Endothelial cell of umbilical vein (primary cell): ENCODE measurements at regions of chr18 and their contacts with region 1.

Region 1: DNA sequence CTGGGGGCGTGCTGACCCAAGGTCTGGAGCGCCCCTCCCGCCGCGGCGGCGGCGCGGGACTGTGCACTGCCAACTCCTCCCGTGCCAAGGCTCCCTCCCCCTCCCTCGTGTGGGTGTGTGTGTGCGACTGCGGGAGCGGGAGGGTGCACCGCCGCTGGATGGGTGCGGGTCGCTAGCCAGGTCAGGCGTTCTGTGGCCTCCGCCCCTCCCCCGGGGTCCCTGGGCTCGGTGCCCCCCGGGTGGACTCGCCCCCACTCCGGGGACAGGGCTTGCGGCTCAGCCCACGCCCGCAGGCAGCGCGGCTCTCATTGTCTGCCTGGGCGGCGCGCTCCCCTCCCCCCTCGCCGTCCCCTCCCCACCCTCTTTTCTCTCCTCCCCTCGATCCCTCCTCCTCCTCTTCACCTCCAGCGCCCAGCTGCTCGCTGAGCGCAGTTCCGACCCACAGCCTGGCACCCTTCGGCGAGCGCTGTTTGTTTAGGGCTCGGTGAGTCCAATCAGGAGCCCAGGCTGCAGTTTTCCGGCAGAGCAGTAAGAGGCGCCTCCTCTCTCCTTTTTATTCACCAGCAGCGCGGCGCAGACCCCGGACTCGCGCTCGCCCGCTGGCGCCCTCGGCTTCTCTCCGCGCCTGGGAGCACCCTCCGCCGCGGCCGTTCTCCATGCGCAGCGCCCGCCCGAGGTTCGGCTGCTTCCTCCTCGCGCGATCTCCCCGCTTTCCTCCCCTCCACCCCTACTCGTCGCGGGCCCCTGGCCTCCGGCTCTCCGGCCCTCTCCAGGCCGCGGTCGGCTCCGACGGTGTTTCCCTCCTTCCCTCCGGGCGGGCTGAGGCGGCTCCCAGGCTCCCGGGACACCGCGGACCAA is at the start of gene GATA6:
- DNase-seq: peak; percentile 95
- H3K4me3 ChIP-seq: peak within 1 kb of the TSS; percentile 83 to 86 (median 83)
- H3K27ac ChIP-seq: peak within 1 kb of the TSS; percentile 87
- H3K4me1 ChIP-seq: peaks cover 33% of the 10 kb centered on the region
- H3K27me3 ChIP-seq: peaks cover 28 to 42% of the 10 kb centered on the region in 2 experiments
- CTCF ChIP-seq: peak; percentile 14 to 63
- POLR2A ChIP-seq: peak; percentile 91
- total RNA-seq, gene GATA6: 14.6 and 14.9 TPM in 2 replicates

Region 2: GRCh38 chr18:21897811-21898210 is 271.4 kb before region 1 on chr18:
- CTCF ChIA-PET with region 1: no interaction called
- POLR2A ChIA-PET with region 1: no interaction called
- dilution Hi-C with region 1: no loop called
- intact Hi-C with region 1: loop called (anchors 2 kb)
- DNase-seq: peak; percentile 57
- H3K4me3 ChIP-seq: no peak overlapping the region
- H3K27ac ChIP-seq: no peak overlapping the region
- H3K4me1 ChIP-seq: peaks cover 9% of the 10 kb centered on the region
- H3K27me3 ChIP-seq: no peaks in the 10 kb centered on the region
- CTCF ChIP-seq: peak; percentile 71 to 74
- POLR2A ChIP-seq: no peak

Region 3: GRCh38 chr18:21997207-21998143 is 171.8 kb before region 1 on chr18:
- CTCF ChIA-PET with region 1: interaction called, 4 read pairs
- POLR2A ChIA-PET with region 1: no interaction called
- dilution Hi-C with region 1: no loop called
- intact Hi-C with region 1: loop called (anchors 2 kb)
- DNase-seq: peak; percentile 68
- H3K4me3 ChIP-seq: no peak overlapping the region
- H3K27ac ChIP-seq: no peak overlapping the region
- H3K4me1 ChIP-seq: no peaks in the 10 kb centered on the region
- H3K27me3 ChIP-seq: peaks cover 0 to 2% of the 10 kb centered on the region in 2 experiments
- CTCF ChIP-seq: peak; percentile 70 to 74
- POLR2A ChIP-seq: no peak

Region 4: GRCh38 chr18:22185273-22185672 is 16.0 kb after region 1 on chr18:
- CTCF ChIA-PET with region 1: interaction called, 8 read pairs
- POLR2A ChIA-PET with region 1: interaction called, 4 read pairs
- dilution Hi-C with region 1: no loop called
- intact Hi-C with region 1: loop called (anchors 1 kb)
- DNase-seq: peak; percentile 21
- H3K4me3 ChIP-seq: no peak overlapping the region
- H3K27ac ChIP-seq: no peak overlapping the region
- H3K4me1 ChIP-seq: peaks cover 62% of the 10 kb centered on the region
- H3K27me3 ChIP-seq: no peaks in the 10 kb centered on the region
- CTCF ChIP-seq: peak in 1 of 2 donors; percentile 26
- POLR2A ChIP-seq: no peak

Region 5: DNA sequence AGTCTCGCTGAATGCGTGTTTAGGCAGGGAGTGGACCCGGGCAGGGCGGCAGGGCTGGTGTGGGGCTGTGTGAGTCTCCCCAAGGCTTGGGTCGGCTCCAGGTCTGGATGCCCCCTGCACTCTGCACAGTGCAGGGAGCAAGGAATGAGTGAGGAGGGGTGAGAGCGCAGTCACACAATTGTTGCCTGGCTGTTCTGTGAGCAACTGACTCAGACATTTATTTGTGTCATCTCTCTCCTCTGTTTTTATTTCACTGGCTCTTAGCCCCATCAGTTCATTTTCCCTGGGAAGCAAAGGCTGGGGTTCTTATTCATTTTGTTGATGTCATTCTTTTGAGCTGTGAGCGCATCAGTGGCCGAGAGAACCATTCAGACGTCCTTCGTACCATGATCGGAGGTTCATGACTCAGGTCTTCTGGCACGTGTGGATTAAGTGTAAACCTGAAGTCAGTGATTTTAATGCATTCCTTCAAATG is 61.3 kb after region 1 on chr18:
- CTCF ChIA-PET with region 1: no interaction called
- POLR2A ChIA-PET with region 1: no interaction called
- dilution Hi-C with region 1: no loop called
- intact Hi-C with region 1: no loop called
- DNase-seq: no peak
- H3K4me3 ChIP-seq: no peak overlapping the region
- H3K27ac ChIP-seq: no peak overlapping the region
- H3K4me1 ChIP-seq: peaks cover 5% of the 10 kb centered on the region
- H3K27me3 ChIP-seq: peaks cover 0 to 10% of the 10 kb centered on the region in 2 experiments
- CTCF ChIP-seq: no peak
- POLR2A ChIP-seq: no peak

Region 6: DNA sequence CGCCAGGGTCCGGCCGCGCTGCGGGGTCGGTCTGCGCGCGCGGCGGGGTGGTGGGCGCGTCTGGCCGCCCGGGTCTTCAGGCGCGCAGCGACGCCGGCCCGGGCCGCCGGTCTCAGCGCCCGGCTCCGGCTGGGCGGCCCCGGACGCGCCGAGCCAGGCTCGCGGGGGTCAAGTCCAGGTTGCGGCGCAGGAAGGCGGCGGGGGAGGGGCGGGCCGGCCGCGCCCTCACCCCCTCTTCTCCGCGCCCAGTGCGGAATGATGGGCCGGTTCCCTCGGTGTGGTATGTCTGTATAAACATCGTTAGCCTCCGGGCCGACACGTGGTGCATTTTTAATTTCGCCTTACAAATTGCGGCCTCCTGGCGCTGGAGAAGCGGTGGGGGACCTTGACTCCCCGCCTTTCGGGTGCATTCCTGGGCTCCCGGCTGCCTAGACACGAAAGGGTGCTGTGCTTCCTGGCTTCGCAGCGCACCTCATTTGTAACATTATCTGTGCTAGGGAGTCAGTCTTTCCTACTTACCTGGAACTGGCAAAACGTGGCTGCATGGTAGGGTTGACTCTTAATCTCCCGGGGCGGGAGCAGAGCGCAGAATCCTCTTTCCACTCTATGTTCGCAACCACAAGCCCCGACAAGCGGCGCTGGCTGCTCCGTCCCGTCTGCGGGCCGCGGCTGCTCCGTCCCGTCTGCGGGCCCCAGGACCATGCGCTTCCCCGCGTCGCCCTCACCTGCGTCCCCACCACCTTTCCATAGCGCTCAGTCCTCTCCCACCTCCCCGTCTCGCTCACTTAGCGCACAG is 179.5 kb after region 1 on chr18:
- CTCF ChIA-PET with region 1: interaction called, 8 read pairs
- POLR2A ChIA-PET with region 1: no interaction called
- dilution Hi-C with region 1: no loop called
- intact Hi-C with region 1: loop called (anchors 1 kb)
- DNase-seq: peak; percentile 56
- H3K4me3 ChIP-seq: peak overlapping the region in 2 of 3 experiments; percentile 33 to 35
- H3K27ac ChIP-seq: peak overlapping the region; percentile 67
- H3K4me1 ChIP-seq: peaks cover 56% of the 10 kb centered on the region
- H3K27me3 ChIP-seq: no peaks in the 10 kb centered on the region
- CTCF ChIP-seq: no peak
- POLR2A ChIP-seq: no peak

Region 7: GRCh38 chr18:22471546-22472131 is 302.4 kb after region 1 on chr18:
- CTCF ChIA-PET with region 1: no interaction called
- POLR2A ChIA-PET with region 1: no interaction called
- dilution Hi-C with region 1: no loop called
- intact Hi-C with region 1: loop called (anchors 1 kb)
- DNase-seq: peak; percentile 84
- H3K4me3 ChIP-seq: no peak overlapping the region
- H3K27ac ChIP-seq: peak overlapping the region; percentile 97
- H3K4me1 ChIP-seq: peaks cover 54% of the 10 kb centered on the region
- H3K27me3 ChIP-seq: no peaks in the 10 kb centered on the region
- CTCF ChIP-seq: no peak
- POLR2A ChIP-seq: peak; percentile 19

Region 8: DNA sequence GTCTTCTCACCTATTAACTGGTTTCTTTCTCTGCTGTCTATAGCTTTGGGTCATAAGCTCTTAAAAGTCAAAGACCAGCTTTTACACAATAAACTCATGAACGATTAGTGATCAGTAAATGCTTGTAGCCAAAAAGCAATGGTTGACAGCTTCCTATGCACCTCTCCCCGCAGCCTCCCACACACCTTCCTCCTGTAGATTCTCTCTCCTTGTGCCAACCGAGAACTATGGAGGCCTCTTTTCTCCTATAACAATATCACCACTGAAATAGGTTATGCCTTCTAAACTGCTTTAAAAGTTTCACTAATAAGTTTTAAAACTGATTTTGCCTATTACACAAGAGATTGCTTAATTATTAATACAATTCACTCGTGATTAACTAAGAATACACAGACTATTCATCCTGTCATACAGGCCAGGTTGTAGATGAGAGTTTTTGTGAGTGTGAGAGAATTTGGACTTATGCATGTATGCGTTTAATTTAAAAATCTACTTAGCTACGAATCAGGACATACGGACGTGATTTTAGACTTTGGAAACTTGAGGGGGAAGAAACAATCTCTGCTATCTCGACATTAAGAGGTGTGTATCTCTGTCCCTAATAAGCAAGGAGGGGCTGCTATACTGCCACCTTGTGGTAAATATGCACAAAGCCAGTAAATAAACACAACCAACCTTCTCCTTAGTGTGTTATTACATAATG is 534.8 kb after region 1 on chr18:
- CTCF ChIA-PET with region 1: interaction called, 6 read pairs
- POLR2A ChIA-PET with region 1: no interaction called
- dilution Hi-C with region 1: no loop called
- intact Hi-C with region 1: loop called (anchors 1 kb)
- DNase-seq: peak; percentile 71
- H3K4me3 ChIP-seq: no peak overlapping the region
- H3K27ac ChIP-seq: no peak overlapping the region
- H3K4me1 ChIP-seq: peaks cover 4% of the 10 kb centered on the region
- H3K27me3 ChIP-seq: no peaks in the 10 kb centered on the region
- CTCF ChIP-seq: peak; percentile 66 to 69
- POLR2A ChIP-seq: no peak